ENCODE measurements at regions of chr4 and their contacts with region 1.

Region 1: DNA sequence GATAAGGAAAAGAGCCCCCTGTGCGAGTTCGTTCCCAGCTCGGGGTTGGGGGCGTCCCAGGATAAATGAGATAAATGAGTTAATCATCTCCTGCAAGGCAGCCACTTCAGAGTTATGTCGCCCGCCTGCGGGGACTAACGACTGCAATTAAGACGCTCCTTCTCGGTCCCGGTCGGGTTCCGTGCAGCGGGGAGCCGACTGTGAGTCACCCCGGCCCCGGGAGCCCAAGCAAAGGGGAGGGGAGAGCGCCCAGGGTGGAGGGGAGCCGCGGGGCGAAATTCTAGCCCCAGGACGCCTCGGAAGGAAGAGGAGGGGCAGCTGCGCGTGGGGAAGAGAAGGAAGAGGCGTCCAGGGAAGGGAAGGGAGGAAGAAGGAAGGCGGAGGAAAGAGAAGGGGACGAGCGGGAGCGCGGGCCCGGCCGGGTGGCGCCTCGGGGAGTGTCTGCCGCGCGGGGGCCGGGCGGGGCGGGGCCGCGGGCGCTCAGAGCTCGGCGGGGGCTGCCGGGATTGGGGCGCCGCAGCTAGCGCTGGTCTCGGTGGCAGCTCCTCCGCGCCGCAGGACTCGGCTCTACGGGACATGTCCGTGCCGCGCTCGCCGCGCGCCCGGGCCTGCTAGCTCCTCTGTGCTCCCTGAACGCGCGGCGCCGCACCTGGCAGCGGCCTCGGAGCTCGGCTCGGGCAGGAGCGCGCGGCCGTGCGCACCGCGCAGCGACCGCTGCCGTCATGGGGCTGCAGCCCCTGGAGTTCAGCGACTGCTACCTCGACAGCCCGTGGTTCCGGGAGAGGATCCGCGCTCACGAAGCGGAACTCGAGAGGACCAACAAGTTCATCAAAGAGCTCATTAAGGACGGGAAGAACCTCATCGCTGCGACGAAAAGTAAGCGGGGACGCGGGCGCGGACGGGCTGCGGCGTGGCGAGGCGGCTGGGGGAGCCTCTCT is at the start of gene ARHGAP10:
- DNase-seq: peak; percentile 72 to 85
- H3K4me3 ChIP-seq: peak within 1 kb of the TSS; percentile 85
- H3K27ac ChIP-seq: peak within 1 kb of the TSS; percentile 70
- H3K4me1 ChIP-seq: peaks cover 58% of the 10 kb centered on the region
- H3K27me3 ChIP-seq: no peaks in the 10 kb centered on the region
- CTCF ChIP-seq: no peak
- total RNA-seq, gene ARHGAP10: 21.7 and 27.5 TPM in 2 replicates

Region 2: GRCh38 chr4:147050356-147050765 is 681.5 kb before region 1 on chr4:
- CTCF ChIA-PET with region 1: no interaction called
- POLR2A ChIA-PET with region 1: interaction called, 10 read pairs
- intact Hi-C with region 1: no loop called
- DNase-seq: no peak
- H3K4me3 ChIP-seq: no peak overlapping the region
- H3K27ac ChIP-seq: no peak overlapping the region
- H3K4me1 ChIP-seq: no peaks in the 10 kb centered on the region
- H3K27me3 ChIP-seq: no peaks in the 10 kb centered on the region
- CTCF ChIP-seq: no peak

Region 3: DNA sequence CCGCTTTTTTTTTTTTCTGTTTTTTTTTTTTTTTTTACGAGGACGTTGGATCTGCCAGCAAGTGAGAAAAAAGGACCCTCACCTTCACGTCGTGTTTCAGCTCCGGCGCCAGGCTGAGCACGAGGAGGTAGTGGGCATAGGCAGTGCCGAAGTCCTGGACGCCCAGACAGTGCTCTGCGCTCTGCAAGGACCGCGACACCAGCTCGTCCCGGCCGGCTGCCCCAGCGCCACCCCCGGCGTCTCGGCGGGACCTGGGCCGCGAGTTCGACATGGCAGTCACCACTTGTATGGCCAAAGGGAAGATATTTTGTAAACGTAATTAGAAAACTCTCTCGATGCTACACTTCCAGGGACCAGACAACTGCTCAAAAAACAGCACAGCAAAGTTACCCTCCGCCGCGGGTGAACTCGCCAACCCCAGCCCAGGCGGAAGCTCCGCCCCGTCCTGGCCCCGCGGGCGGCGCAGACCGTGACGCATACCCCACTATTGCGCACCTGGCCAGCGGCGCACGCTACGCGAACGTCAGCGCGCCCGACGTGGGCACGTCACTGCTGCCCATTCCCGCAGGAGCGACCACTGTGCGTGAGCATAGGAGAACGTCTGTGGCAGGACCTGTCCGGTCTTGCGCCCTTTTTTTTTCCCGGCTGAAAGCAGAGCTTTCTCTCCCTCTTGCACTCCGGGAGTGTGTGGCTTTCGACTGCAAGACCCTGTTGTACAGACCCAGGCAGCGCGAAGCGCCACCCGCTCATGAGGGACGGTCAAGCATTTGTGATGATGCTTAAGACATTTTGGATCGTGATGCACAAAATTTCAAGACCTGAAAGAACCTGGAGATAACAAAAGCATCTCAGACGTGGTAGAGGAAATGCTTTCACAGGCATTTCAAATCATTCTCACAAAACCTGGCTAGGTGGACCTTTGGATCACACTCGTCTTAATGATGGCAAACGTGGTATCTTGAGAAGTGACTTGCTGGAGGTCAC is 47.8 kb before region 1 on chr4 and contains the start of gene PRMT9:
- CTCF ChIA-PET with region 1: interaction called, 3 read pairs
- POLR2A ChIA-PET with region 1: interaction called, 12 read pairs
- intact Hi-C with region 1: no loop called
- DNase-seq: peak; percentile 69 to 89
- H3K4me3 ChIP-seq: peak within 1 kb of the TSS; percentile 82
- H3K27ac ChIP-seq: peak within 1 kb of the TSS; percentile 59
- H3K4me1 ChIP-seq: peaks cover 8% of the 10 kb centered on the region; the same call in 1 of the 2 replicates
- H3K27me3 ChIP-seq: no peaks in the 10 kb centered on the region
- CTCF ChIP-seq: no peak
- total RNA-seq, gene PRMT9: 8.4 and 9.0 TPM in 2 replicates

Region 4: GRCh38 chr4:147793569-147794313 is 61.9 kb after region 1 on chr4:
- CTCF ChIA-PET with region 1: no interaction called
- POLR2A ChIA-PET with region 1: no interaction called
- intact Hi-C with region 1: loop called (anchors 2 kb)
- DNase-seq: peak in 1 of 2 experiments; percentile 62
- H3K4me3 ChIP-seq: peak overlapping the region; percentile 8; the same call in 1 of the 2 replicates
- H3K27ac ChIP-seq: peak overlapping the region; percentile 37
- H3K4me1 ChIP-seq: peaks cover 60% of the 10 kb centered on the region
- H3K27me3 ChIP-seq: no peaks in the 10 kb centered on the region
- CTCF ChIP-seq: no peak